ENCODE measurements at regions of chr1 and their contacts with region 1.

Region 1: GRCh38 chr1:98754176-98754575 is 92.7 kb downstream of the SNX7 start:
- DNase-seq: no peak
- H3K4me3 ChIP-seq: no peak overlapping the region
- H3K27ac ChIP-seq: no peak overlapping the region
- H3K4me1 ChIP-seq: no peaks in the 10 kb centered on the region
- H3K27me3 ChIP-seq: no peaks in the 10 kb centered on the region
- CTCF ChIP-seq: no peak

Region 2: GRCh38 chr1:97947695-97948094 is 806.5 kb before region 1 on chr1:
- intact Hi-C with region 1: no loop called
- DNase-seq: no peak
- H3K4me3 ChIP-seq: no peak overlapping the region
- H3K27ac ChIP-seq: no peak overlapping the region
- H3K4me1 ChIP-seq: peaks cover 0 to 6% (median 0%) of the 10 kb centered on the region in 4 donors
- H3K27me3 ChIP-seq: peaks cover 0 to 2% of the 10 kb centered on the region in 2 donors
- CTCF ChIP-seq: no peak

Region 3: GRCh38 chr1:98704474-98704873 is 49.7 kb before region 1 on chr1:
- intact Hi-C with region 1: loop called (anchors 10 kb)
- DNase-seq: no peak
- H3K4me3 ChIP-seq: no peak overlapping the region
- H3K27ac ChIP-seq: no peak overlapping the region
- H3K4me1 ChIP-seq: peaks cover 0 to 3% (median 0%) of the 10 kb centered on the region in 4 donors
- H3K27me3 ChIP-seq: no peaks in the 10 kb centered on the region
- CTCF ChIP-seq: no peak